Activated T-helper 2 cell treated with anti-CD3 and anti-CD28 coated beads, Interferon-gamma antibody, Interleukin-2, Interleukin-4, amounts not matched to agents 10 μg/mL and 5 μg/mL and 100 μg/mL, durations not matched to agents 14 hours and 24 hours and 36 hours (primary cell): ENCODE measurements at regions of chr11 and their contacts with region 1.

Region 1: GRCh38 chr11:61509043-61510029 is 787 bp downstream of the LRRC10B start:
- DNase-seq: peak; percentile 76
- H3K4me3 Mint-ChIP-seq: peak overlapping the region; percentile 18
- H3K27ac Mint-ChIP-seq: no peak overlapping the region
- H3K4me1 Mint-ChIP-seq: peaks cover 6% of the 10 kb centered on the region
- H3K27me3 Mint-ChIP-seq: peaks cover 46% of the 10 kb centered on the region

Region 2: DNA sequence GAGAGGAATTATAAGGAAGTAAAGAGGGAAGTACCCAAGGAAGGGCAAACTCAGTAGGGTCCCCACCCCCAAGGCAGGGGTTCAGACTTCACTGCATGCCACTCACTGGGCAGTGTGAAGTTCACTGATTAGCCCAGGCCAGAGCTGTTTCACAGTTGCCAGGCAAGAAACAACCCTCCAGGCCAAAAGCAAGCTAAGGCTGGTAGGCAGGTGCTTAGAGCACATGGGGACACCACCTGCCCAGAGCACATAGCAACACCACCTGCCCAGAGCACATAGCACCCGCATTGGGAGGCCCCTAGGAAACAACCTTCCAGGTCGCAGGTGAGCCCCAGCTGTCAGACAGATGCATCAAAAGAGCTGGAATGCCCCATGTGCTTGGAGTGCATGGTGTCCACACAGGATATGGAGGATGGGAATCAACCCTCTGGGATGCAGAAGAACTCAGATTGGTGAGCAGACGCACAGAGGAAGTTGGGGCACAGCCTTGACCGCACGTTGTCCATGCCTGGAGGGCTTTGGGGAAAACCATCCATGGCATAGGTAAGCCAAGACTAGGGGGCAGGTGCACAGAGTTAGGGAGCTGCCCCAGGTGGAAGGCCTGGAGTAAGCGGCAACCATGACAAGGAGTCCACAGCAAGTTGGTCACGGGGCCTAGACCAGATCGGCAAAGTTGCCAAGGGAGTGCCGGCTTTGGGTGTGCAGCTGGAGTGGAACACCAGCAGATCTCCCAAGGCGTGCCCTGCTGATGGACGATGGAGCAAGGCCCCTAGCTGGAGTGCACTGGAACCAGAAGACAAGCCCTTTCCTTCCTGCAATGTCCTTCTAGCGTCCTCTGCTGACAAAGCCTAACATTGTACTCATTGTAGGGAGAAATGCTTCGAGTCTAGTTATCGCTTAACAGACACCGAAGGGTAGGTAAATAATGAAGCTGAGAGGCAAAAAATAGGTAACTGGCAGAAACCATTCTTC is 124.8 kb before region 1 on chr11:
- intact Hi-C with region 1: no loop called
- DNase-seq: no peak
- H3K4me3 Mint-ChIP-seq: no peak overlapping the region
- H3K27ac Mint-ChIP-seq: no peak overlapping the region
- H3K4me1 Mint-ChIP-seq: peaks cover 6% of the 10 kb centered on the region
- H3K27me3 Mint-ChIP-seq: no peaks in the 10 kb centered on the region

Region 3: DNA sequence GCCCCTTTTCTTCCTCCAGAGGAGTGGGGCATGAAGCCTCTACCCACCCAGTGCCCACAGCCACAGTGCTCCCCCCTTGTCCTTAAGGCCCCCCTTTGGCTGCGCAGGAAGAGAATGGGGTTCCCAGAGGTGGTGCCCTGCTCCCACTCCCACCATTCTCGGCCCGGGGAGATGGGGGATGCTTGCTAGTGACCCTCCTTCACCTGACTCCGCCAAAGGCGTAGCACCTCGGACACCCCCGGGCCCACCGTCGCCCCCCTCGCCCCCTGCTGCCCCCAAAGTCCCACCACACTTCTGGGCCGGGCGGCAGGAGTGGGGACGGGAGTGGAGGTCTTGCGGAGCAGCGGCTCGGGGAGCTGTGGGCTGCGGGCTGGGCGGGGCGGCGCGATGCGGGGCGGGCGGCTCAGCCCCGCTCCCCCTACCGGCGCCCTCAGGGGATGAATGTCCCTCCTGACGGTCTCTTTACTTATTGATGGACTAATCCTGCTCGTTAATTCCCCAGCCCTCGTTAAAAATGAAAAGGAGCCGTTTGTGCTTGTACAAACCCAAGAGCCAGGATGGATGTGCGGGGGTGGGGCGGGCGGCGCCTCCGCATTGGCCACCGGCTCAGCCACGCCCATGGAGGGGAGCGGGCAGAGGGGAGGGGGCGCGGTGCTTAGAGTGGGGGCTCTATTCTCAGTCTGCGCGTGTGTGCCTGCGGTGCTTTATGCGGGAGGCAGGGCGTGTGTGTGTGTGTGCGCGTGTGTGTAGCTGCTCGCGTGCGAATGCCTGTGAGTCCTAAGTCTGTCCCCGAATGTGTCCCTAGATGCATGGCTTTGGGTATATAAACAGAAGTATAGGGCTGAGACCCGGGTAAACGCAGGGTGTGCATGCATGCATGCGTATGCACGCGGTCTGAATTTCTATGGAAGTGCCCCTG is 46.0 kb after region 1 on chr11:
- intact Hi-C with region 1: no loop called
- DNase-seq: no peak
- H3K4me3 Mint-ChIP-seq: no peak overlapping the region
- H3K27ac Mint-ChIP-seq: no peak overlapping the region
- H3K4me1 Mint-ChIP-seq: peaks cover 6% of the 10 kb centered on the region
- H3K27me3 Mint-ChIP-seq: peaks cover 41% of the 10 kb centered on the region

Region 4: DNA sequence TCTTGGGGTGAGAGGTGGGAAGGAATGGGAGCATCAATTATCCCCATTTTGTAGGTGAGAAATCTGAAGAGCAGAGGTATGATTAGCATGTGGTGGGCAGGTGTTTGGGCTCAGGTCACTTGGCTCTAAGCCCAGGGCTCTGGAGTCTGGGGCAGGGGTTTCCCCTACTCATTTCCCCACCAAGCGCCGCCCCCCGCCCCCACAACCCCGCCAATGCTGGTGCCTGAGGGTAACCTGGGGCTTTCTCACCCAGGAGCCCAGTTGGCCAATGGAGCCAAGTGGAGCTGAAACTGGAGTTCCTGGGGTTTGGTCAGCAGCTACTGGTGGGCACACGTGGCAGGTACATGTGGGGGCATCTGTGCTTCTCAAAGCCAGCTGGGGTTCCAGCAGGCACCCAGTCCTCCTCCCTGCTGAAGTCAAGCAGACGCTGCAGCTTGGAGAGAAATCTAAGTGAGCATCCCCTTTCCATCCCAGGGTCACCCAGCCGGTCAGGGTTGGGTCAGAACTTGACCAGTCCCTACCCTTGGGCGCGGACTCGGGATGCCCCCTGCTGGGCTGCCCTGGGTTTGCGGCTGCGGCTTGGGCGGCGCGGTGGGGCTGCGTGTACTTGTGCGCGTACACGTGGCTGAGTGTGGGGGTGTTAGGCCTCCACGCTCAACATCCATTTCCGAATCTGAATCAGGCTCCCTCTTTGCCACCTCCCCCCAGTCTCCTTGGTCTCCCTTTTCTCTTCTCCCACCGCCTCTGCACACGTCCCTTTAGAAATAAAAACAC is 1413.5 kb after region 1 on chr11:
- intact Hi-C with region 1: loop called (anchors 10 kb)
- DNase-seq: no peak
- H3K4me3 Mint-ChIP-seq: no peak overlapping the region
- H3K27ac Mint-ChIP-seq: no peak overlapping the region
- H3K4me1 Mint-ChIP-seq: peaks cover 9% of the 10 kb centered on the region
- H3K27me3 Mint-ChIP-seq: peaks cover 73% of the 10 kb centered on the region